ENCODE measurements at regions of chr10 and their contacts with region 1.

Region 1: GRCh38 chr10:96089670-96090462 is 40.2 kb upstream of the ZNF518A start:
- DNase-seq: peak; percentile 96 to 97
- H3K4me3 ChIP-seq: peak overlapping the region; percentile 75
- H3K4me3 Mint-ChIP-seq: peak overlapping the region; percentile 90
- H3K27ac Mint-ChIP-seq: peak overlapping the region; percentile 98
- H3K4me1 ChIP-seq: peaks cover 21% of the 10 kb centered on the region
- H3K4me1 Mint-ChIP-seq: no peaks in the 10 kb centered on the region
- H3K27me3 ChIP-seq: no peaks in the 10 kb centered on the region
- H3K27me3 Mint-ChIP-seq: peaks cover 2% of the 10 kb centered on the region
- CTCF ChIP-seq: no peak

Region 2: DNA sequence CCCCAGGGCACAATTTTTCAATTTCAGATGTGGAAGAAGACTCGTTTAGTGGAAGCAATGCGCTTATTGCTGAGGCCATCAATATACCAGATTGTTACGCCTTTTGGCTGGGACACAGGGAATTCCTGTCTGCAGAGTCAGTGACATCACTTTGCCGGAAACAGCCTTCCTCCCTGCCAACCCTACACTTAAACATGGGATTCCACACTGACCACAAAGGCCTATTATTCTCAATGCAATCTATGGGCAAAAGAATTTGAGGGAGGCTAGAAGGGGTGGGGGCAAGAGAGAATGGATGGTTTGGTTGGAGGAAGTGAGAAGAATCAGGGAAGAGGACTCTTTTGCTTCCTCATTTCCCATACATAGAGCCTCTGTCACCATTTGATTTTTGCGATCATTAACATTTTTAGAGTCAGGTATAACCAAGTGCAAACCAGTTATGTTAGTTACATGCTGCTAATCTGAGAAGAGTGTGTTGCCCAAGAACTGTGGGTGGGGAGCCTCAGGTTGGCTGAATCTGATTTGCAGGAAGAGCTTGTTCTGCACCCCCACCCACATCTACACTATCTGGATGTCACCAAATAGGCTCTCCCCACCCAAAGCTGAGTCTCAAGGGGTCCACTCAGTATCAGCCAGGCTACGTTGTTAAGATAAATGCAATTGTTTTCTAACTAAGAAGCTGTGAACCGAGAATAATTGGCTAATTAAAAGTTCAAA is 275.7 kb before region 1 on chr10:
- CTCF ChIA-PET with region 1: no interaction called
- POLR2A ChIA-PET with region 1: no interaction called
- intact Hi-C with region 1: no loop called
- DNase-seq: no peak
- H3K4me3 ChIP-seq: no peak overlapping the region
- H3K4me3 Mint-ChIP-seq: no peak overlapping the region
- H3K27ac Mint-ChIP-seq: no peak overlapping the region
- H3K4me1 ChIP-seq: peaks cover 12% of the 10 kb centered on the region
- H3K4me1 Mint-ChIP-seq: peaks cover 12% of the 10 kb centered on the region
- H3K27me3 ChIP-seq: no peaks in the 10 kb centered on the region
- H3K27me3 Mint-ChIP-seq: no peaks in the 10 kb centered on the region
- CTCF ChIP-seq: no peak

Region 3: GRCh38 chr10:96017191-96017687 is 72.6 kb before region 1 on chr10:
- CTCF ChIA-PET with region 1: no interaction called
- POLR2A ChIA-PET with region 1: interaction called, 7 read pairs
- intact Hi-C with region 1: loop called (anchors 2 kb)
- DNase-seq: peak; percentile 54 to 75
- H3K4me3 ChIP-seq: no peak overlapping the region
- H3K4me3 Mint-ChIP-seq: no peak overlapping the region
- H3K27ac Mint-ChIP-seq: no peak overlapping the region
- H3K4me1 ChIP-seq: 0 out of 2 replicates have a peak, but pooled peaks cover 5% of the 10 kb centered on the region
- H3K4me1 Mint-ChIP-seq: peaks cover 6% of the 10 kb centered on the region
- H3K27me3 ChIP-seq: no peaks in the 10 kb centered on the region
- H3K27me3 Mint-ChIP-seq: no peaks in the 10 kb centered on the region
- CTCF ChIP-seq: peak; percentile 64 to 75

Region 4: GRCh38 chr10:96043033-96043932 is 46.6 kb before region 1 on chr10 and contains the start of gene CCNJ:
- CTCF ChIA-PET with region 1: no interaction called
- POLR2A ChIA-PET with region 1: interaction called, 10 read pairs
- intact Hi-C with region 1: loop called (anchors 1 kb)
- DNase-seq: peak; percentile 91 to 95
- H3K4me3 ChIP-seq: peak within 1 kb of the TSS; percentile 97
- H3K4me3 Mint-ChIP-seq: peak within 1 kb of the TSS; percentile 84
- H3K27ac Mint-ChIP-seq: peak within 1 kb of the TSS; percentile 93
- H3K4me1 ChIP-seq: peaks cover 47% of the 10 kb centered on the region
- H3K4me1 Mint-ChIP-seq: peaks cover 33% of the 10 kb centered on the region
- H3K27me3 ChIP-seq: no peaks in the 10 kb centered on the region
- H3K27me3 Mint-ChIP-seq: no peaks in the 10 kb centered on the region
- CTCF ChIP-seq: peak; percentile 18 to 19
- total RNA-seq, gene CCNJ: 22.2 and 23.5 TPM in 2 replicates

Region 5: GRCh38 chr10:96107623-96108038 is 17.8 kb after region 1 on chr10:
- CTCF ChIA-PET with region 1: no interaction called
- POLR2A ChIA-PET with region 1: no interaction called
- intact Hi-C with region 1: no loop called
- DNase-seq: no peak
- H3K4me3 ChIP-seq: no peak overlapping the region
- H3K4me3 Mint-ChIP-seq: no peak overlapping the region
- H3K27ac Mint-ChIP-seq: no peak overlapping the region
- H3K4me1 ChIP-seq: no peaks in the 10 kb centered on the region
- H3K4me1 Mint-ChIP-seq: no peaks in the 10 kb centered on the region
- H3K27me3 ChIP-seq: no peaks in the 10 kb centered on the region
- H3K27me3 Mint-ChIP-seq: peaks cover 37% of the 10 kb centered on the region
- CTCF ChIP-seq: no peak

Region 6: GRCh38 chr10:96118604-96119450 is 29.0 kb after region 1 on chr10:
- CTCF ChIA-PET with region 1: no interaction called
- POLR2A ChIA-PET with region 1: no interaction called
- intact Hi-C with region 1: loop called (anchors 1 kb)
- DNase-seq: peak; percentile 73 to 86
- H3K4me3 ChIP-seq: peak overlapping the region; percentile 56
- H3K4me3 Mint-ChIP-seq: peak overlapping the region; percentile 90
- H3K27ac Mint-ChIP-seq: peak overlapping the region; percentile 80
- H3K4me1 ChIP-seq: peaks cover 4% of the 10 kb centered on the region
- H3K4me1 Mint-ChIP-seq: peaks cover 7% of the 10 kb centered on the region
- H3K27me3 ChIP-seq: 0 out of 2 replicates have a peak, but pooled peaks cover 1% of the 10 kb centered on the region
- H3K27me3 Mint-ChIP-seq: peaks cover 17% of the 10 kb centered on the region
- CTCF ChIP-seq: no peak

Region 7: DNA sequence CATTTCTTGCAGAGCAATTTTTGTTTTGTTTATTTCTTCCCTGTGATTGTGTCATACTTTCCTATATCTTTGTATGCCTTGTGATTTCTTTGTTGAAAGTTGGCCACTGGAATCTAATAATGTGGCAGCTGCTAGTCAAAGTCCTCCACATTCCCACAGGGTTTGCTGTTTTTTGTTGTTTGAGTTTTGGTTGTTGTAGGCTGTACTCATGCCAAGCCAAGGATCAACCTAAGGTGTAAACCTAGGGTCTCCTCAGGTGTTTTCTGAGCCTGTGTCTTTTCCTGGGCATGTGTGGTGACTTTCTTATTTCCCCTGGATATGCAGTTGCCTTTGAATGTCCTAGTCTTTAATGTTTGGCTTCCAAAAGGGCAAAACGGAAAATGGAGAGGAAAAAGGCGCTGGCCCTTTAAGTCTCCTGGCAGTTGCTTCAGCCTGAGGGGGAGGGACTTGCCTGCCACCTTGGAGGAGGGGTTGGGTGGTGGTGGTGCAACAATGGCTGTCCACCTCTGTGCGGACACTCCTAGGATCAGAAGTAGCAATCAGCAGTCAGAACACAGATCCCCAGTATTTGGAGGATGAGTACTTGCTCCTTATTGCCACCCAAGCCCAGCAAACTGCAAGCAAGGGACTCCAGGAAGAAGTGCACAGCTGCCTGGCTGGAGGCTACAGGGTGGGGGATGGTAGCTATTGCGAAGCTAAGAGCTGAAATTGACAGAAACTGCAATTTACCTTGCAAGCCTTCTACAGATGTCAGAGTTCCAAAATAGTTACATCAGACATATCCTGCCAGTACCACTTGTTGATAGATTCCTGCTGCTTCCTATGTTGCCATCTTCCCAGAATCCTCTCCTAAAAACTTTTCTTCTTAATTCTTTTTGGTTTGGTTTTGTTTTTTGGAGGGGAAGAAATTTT is 34.6 kb after region 1 on chr10:
- CTCF ChIA-PET with region 1: interaction called, 19 read pairs
- POLR2A ChIA-PET with region 1: interaction called, 90 read pairs
- intact Hi-C with region 1: loop called (anchors 1 kb)
- DNase-seq: peak; percentile 85
- H3K4me3 ChIP-seq: peak overlapping the region; percentile 42
- H3K4me3 Mint-ChIP-seq: peak overlapping the region; percentile 89
- H3K27ac Mint-ChIP-seq: peak overlapping the region; percentile 95
- H3K4me1 ChIP-seq: peaks cover 17% of the 10 kb centered on the region
- H3K4me1 Mint-ChIP-seq: peaks cover 12% of the 10 kb centered on the region
- H3K27me3 ChIP-seq: no peaks in the 10 kb centered on the region
- H3K27me3 Mint-ChIP-seq: peaks cover 3% of the 10 kb centered on the region
- CTCF ChIP-seq: no peak

Region 8: GRCh38 chr10:96129387-96130325 is 39.8 kb after region 1 on chr10 and contains the start of gene ZNF518A:
- CTCF ChIA-PET with region 1: interaction called, 19 read pairs
- POLR2A ChIA-PET with region 1: interaction called, 90 read pairs
- intact Hi-C with region 1: loop called (anchors 1 kb)
- DNase-seq: peak; percentile 95 to 97
- H3K4me3 ChIP-seq: peak within 1 kb of the TSS; percentile 75
- H3K4me3 Mint-ChIP-seq: peak within 1 kb of the TSS; percentile 93
- H3K27ac Mint-ChIP-seq: peak within 1 kb of the TSS; percentile 96
- H3K4me1 ChIP-seq: peaks cover 17% of the 10 kb centered on the region
- H3K4me1 Mint-ChIP-seq: peaks cover 12% of the 10 kb centered on the region
- H3K27me3 ChIP-seq: no peaks in the 10 kb centered on the region
- H3K27me3 Mint-ChIP-seq: no peaks in the 10 kb centered on the region
- CTCF ChIP-seq: no peak
- total RNA-seq, gene ZNF518A: 47.2 TPM in 2 replicates

Measured in Caco-2 (cell line).